Keratinocyte (primary cell): ENCODE measurements at regions of chr1 and their contacts with region 1.

Region 1: GRCh38 chr1:2194898-2195673 is 514 bp upstream of the FAAP20 start:
- DNase-seq: no peak
- H3K4me3 ChIP-seq: peak overlapping the region; percentile 54 to 77 (median 74)
- H3K27ac ChIP-seq: peak overlapping the region; percentile 78
- H3K4me1 ChIP-seq: peaks cover 10% of the 10 kb centered on the region
- H3K27me3 ChIP-seq: no peaks in the 10 kb centered on the region
- CTCF ChIP-seq: peak; percentile 85 to 99 (median 93)

Region 2: DNA sequence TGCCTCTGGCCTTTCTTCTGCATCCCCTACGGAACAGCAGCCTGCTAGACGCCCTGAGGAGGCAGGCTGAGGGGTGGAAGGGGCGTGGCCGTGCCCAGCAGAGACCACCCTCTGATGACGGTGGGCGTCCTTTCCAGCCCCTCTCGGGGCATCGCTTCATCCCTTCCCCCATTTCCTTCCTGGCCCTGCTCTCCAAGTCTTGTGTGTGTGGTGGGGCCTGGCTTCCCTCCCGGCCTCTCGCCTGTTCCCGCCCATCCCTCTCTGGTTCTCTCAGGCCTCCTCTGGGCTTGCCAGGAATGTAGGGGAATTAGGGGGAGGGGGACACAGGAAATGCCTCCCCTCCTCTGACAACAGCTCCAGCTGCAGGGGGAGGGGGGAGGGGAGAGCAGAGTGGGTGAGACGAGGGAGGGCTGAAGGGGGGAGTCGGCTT is 84.1 kb after region 1 on chr1:
- dilution Hi-C with region 1: loop called (anchors 10 kb)
- DNase-seq: no peak
- H3K4me3 ChIP-seq: no peak overlapping the region
- H3K27ac ChIP-seq: no peak overlapping the region
- H3K4me1 ChIP-seq: peaks cover 4% of the 10 kb centered on the region
- H3K27me3 ChIP-seq: no peaks in the 10 kb centered on the region
- CTCF ChIP-seq: no peak